Cardiac septum (tissue), 1 donor: ENCODE measurements at regions of chr4 and their contacts with region 1.

Region 1: DNA sequence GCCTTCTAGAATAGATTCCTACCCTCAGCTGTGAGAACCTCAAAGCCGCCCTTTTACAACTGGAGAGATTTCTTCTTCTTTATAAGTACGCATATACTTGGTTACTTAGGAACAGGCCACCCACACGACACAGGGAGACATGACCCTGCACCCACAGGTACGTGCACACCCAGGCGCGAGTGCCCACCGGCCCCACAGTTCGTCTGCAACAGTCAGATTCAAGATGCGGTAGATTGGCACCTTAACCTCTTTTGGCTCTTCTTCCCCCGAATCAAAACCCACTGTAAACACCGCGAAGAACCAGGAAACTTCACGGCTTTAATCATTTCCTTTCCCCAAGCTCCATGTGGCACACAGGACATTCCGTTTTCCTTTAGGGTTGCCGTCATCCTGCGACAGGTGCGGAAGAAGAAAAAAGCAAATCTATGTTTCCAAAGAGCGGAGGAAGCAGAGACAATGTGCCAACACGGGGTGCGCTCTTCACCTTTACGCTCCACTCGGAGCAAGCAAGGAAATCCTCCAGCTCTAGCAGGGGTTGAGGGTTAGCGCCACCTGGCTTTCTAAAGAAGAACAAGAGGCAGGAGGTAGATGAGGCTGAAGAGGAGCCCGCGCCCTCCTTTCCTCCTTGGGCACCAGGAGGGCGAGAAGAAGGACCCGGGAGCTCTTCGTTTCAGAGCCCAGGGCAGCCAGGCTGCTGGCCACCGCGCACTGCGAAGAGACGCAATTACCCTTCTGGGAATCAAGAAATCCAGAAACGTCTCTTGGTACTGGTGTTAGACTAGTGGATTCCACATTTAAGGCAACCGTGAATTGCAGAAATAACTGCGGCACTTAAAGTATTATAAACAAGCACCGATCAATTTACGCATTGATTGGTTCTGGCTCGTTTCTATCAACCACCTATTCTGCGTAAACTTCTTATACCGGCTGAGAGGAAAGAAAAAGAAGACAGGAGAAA is 35.7 kb downstream of the HAND2 start:
- DNase-seq: no peak

Region 2: GRCh38 chr4:173318648-173319211 is 175.6 kb before region 1 on chr4:
- intact Hi-C with region 1: loop called (anchors 5 kb)
- DNase-seq: no peak

Region 3: DNA sequence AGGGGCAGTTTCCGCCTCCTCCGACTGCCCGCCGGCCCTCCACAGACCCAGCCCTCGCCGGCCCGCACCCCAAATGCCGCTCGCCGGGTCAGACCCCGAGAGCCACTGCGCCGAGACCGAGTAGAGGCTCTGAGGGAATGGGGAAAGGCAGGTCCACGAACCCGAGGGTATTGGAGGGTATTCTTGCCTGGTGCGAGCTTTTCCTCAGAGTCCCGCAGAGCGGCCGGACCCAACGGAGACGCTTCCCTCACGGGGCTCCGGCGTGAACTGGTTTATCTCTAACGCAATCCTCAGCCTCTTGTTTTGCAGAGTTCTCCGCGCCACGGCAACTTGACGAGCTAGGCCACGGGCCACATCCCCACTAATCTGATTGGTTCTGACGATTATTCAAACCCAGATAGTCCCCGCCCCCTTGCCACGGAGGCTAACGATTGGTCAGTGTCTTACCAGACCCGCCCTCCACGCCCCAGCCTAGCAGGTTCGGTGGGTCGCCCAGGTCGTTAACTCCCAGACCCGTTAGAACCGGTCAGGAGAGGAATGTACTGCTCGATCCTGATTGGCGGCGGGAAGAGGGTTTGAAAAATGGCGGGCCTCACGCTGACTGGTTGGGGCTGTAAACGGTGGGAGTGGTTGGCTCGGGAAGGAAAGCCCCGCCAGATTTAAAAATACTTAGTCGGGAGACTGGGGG is 160.1 kb before region 1 on chr4 and contains the start of gene HMGB2:
- intact Hi-C with region 1: loop called (anchors 5 kb)
- DNase-seq: peak; percentile 100
- total RNA-seq, gene HMGB2: 41.8 TPM

Region 4: DNA sequence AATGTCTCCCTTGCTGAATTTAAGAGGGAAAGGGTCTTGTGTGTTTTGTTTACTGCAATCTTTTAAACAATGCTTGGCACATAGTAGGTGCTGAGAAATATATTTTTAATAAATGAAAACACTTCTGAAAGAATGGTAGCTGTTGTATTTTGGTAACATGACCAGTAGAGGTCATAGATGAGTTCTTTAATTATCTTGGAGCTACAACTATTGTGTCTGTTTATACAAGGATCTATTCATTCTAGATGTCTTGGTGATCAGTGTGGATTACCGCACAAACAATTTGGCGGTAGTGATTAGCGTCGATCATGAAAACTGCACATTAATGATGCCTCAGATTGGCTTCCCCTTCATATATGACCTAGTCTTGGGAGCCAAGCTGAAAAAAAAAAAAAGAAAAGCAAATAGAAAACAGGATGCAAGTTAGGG is 74.0 kb before region 1 on chr4:
- intact Hi-C with region 1: loop called (anchors 1 kb)
- DNase-seq: no peak